GM12878 (cell line): ENCODE measurements at regions of chr12 and their contacts with region 1.

Region 1: DNA sequence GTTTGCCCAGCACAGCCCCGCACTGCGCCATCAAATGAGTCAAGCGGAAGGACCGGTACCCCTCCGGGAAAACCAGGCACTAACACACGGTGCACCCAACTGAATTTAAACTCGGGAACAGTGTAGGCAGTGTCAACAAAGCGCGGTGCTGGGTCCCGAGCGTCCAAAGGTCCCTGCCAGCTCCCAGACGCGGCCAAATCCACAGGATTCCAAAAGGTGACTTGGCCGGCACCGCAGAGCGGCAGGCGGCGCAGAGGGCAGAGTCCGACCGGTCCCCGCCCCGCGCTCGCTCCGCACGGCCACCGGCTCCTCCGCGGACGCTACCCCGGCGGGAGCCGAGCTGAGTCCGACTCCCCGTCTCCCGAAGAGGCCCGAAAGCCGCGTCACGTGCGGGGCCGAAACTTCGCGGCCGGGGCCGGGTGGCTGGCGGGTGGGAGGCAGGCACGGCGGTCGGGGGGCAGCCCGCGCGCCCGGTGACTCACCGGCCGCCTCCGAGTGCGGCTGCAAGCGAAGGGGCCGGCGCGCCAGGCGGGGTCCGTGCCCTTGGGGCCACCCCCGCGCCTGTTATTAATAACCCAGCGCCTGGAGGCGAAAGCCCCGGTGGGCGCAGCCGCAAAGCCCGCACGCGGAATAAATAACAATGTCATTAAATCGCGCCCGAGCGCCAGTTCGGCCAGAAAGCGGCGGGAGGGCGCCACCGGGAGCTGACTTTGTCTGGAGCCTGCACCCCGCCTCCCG is 863 bp downstream of the DENND5B start:
- DNase-seq: no peak
- ATAC-seq: peak; percentile 64
- H3K4me3 ChIP-seq: peak overlapping the region; percentile 87
- H3K27ac ChIP-seq: peak overlapping the region; percentile 93
- H3K4me1 ChIP-seq: peaks cover 27% of the 10 kb centered on the region
- H3K27me3 ChIP-seq: no peaks in the 10 kb centered on the region
- CTCF ChIP-seq: 0 out of 6 replicates have a peak, but pooled peaks of 1 of the 3 experiments have one; percentile 5
- EP300 ChIP-seq: no peak
- POLR2A ChIP-seq: peak; percentile 65; the same call in 1 of the 2 replicates
- RAD21 ChIP-seq: peak; percentile 34; the same call in 1 of the 2 replicates

Region 2: GRCh38 chr12:31482816-31483215 is 107.3 kb before region 1 on chr12:
- CTCF ChIA-PET with region 1: no interaction called
- POLR2A ChIA-PET with region 1: no interaction called
- RAD21 ChIA-PET with region 1: no interaction called
- SMC1A ChIA-PET with region 1: no interaction called
- in situ Hi-C with region 1: no loop called
- intact Hi-C with region 1: loop called (anchors 5 kb)
- DNase-seq: no peak
- ATAC-seq: no peak
- H3K4me3 ChIP-seq: no peak overlapping the region
- H3K27ac ChIP-seq: no peak overlapping the region
- H3K4me1 ChIP-seq: peaks cover 25% of the 10 kb centered on the region
- H3K27me3 ChIP-seq: no peaks in the 10 kb centered on the region
- CTCF ChIP-seq: no peak
- EP300 ChIP-seq: no peak
- POLR2A ChIP-seq: no peak
- RAD21 ChIP-seq: no peak

Region 3: GRCh38 chr12:32312049-32312670 is 722.1 kb after region 1 on chr12:
- CTCF ChIA-PET with region 1: no interaction called
- POLR2A ChIA-PET with region 1: no interaction called
- RAD21 ChIA-PET with region 1: no interaction called
- SMC1A ChIA-PET with region 1: no interaction called
- in situ Hi-C with region 1: no loop called
- intact Hi-C with region 1: no loop called
- DNase-seq: peak; percentile 21
- ATAC-seq: peak; percentile 77
- H3K4me3 ChIP-seq: no peak overlapping the region
- H3K27ac ChIP-seq: no peak overlapping the region
- H3K4me1 ChIP-seq: no peaks in the 10 kb centered on the region
- H3K27me3 ChIP-seq: no peaks in the 10 kb centered on the region
- CTCF ChIP-seq: peak; percentile 39 to 63 (median 56); a peak in 5 of 6 replicates
- EP300 ChIP-seq: no peak
- POLR2A ChIP-seq: no peak
- RAD21 ChIP-seq: peak; percentile 62